Activated CD4-positive, alpha-beta memory T cell treated with anti-CD3 and anti-CD28 coated beads, Interleukin-2, amount 10 ng/mL, durations not matched to agents 7 days and 5 days (primary cell): ENCODE measurements at regions of chr3 and their contacts with region 1.

Region 1: DNA sequence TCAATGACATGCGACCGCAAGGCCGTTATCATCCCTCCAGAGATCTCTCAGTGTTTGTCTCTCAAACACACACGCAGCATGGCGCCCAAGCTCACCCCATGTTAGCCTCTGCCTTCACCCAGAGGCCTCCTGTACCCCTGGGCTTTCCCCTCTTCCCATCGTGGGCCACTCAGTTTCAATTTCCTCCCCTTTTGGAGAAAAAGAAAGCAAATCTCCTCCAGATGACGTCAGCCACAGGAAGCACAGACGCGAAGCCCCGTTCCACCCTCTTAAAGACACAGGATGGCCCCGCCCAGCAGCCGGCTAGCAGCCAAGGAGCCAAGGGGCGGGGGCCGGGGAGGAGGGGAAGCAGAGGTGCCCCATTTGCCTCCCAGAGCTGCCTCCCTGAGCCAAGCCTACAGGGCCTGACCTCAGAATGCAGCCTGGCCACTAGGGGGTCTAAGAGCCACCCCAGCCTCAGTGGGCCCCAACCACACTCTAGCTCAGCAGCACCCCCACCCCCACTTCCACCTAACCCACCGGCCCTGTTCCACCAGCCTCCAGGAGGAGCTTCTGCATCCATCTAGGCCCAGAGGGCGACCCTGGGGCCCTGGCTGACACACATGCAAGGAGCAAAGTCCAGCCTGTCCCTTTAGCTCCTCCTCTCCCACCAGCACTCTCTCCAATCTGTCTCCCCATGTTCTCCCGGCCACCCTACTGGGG is 26.5 kb downstream of the ATRIP start:
- DNase-seq: peak; percentile 97
- H3K4me3 Mint-ChIP-seq: peak overlapping the region; percentile 83
- H3K27ac Mint-ChIP-seq: peak overlapping the region; percentile 98
- H3K4me1 Mint-ChIP-seq: peaks cover 74% of the 10 kb centered on the region
- H3K27me3 Mint-ChIP-seq: no peaks in the 10 kb centered on the region

Region 2: DNA sequence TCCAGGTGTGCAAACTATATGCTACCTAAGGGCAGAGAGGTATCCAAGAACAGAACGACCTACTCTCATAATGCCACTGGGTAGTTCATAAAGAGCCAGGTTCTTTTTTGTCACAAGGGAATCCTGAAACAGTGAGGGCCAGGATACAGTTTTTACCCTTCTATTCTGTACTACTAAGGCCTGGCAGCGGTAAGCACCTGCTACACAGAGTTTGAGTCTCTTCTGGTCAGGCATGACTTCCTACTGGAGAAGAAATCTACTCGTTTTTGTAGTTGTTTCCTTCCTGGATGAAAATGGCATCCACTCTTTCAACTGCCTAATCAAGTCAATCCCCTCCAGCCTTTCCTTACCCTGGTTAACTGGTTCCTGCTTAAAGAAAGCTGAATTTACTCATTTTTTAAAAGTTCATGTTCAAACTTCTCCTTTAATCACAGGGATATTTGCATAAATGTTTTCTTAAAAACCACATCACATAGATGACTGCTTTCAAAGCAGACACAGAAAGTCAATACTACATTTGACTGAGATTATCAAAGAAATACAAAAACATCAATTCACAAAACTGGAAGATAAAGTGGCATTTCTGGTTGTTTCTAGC is 496.8 kb before region 1 on chr3:
- CTCF ChIA-PET with region 1: no interaction called
- POLR2A ChIA-PET with region 1: no interaction called
- DNase-seq: no peak
- H3K4me3 Mint-ChIP-seq: no peak overlapping the region
- H3K27ac Mint-ChIP-seq: no peak overlapping the region
- H3K4me1 Mint-ChIP-seq: peaks cover 4% of the 10 kb centered on the region
- H3K27me3 Mint-ChIP-seq: no peaks in the 10 kb centered on the region

Region 3: DNA sequence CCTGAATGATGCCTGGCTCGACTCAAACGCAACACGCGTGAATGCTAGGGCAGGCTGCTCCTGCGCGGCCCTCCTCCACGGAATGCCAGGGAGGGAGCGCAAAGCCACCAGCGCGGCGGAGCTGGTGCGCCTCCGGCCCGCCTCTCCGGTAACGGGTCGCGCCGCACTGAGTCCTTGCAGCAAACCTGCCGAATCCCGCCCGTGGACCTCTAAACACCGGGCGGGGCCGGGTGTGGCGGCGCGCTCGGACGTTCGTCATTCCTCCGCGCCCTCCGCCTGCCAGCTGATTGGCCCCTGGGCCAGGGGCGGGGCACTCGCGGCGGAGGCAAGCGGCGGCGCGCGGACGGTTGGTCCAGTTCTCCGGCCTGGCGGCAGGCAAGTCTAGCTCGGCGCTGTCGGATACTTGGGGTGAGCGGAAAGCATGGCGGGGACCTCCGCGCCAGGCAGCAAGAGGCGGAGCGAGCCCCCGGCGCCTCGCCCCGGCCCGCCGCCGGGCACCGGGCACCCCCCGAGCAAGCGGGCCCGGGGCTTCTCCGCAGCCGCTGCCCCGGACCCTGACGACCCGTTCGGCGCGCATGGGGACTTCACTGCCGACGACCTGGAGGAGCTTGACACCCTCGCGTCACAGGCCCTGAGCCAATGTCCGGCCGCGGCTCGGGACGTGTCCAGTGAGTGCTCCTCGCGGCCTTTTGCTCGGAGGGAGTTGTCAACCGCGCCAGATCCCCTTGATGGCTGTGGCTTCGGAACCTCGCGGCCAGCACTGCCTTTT is 26.5 kb before region 1 on chr3 and contains the start of gene ATRIP:
- CTCF ChIA-PET with region 1: interaction called, 17 read pairs
- POLR2A ChIA-PET with region 1: interaction called, 69 read pairs
- DNase-seq: peak; percentile 90
- H3K4me3 Mint-ChIP-seq: peak within 1 kb of the TSS; percentile 90
- H3K27ac Mint-ChIP-seq: peak within 1 kb of the TSS; percentile 88
- H3K4me1 Mint-ChIP-seq: peaks cover 53% of the 10 kb centered on the region
- H3K27me3 Mint-ChIP-seq: no peaks in the 10 kb centered on the region
- total RNA-seq, gene ATRIP: 13.4 to 15.2 TPM

Region 4: GRCh38 chr3:48459773-48460516 is 13.1 kb before region 1 on chr3:
- CTCF ChIA-PET with region 1: interaction called, 6 read pairs
- POLR2A ChIA-PET with region 1: interaction called, 23 read pairs
- DNase-seq: no peak
- H3K4me3 Mint-ChIP-seq: no peak overlapping the region
- H3K27ac Mint-ChIP-seq: no peak overlapping the region
- H3K4me1 Mint-ChIP-seq: peaks cover 6% of the 10 kb centered on the region
- H3K27me3 Mint-ChIP-seq: no peaks in the 10 kb centered on the region

Region 5: DNA sequence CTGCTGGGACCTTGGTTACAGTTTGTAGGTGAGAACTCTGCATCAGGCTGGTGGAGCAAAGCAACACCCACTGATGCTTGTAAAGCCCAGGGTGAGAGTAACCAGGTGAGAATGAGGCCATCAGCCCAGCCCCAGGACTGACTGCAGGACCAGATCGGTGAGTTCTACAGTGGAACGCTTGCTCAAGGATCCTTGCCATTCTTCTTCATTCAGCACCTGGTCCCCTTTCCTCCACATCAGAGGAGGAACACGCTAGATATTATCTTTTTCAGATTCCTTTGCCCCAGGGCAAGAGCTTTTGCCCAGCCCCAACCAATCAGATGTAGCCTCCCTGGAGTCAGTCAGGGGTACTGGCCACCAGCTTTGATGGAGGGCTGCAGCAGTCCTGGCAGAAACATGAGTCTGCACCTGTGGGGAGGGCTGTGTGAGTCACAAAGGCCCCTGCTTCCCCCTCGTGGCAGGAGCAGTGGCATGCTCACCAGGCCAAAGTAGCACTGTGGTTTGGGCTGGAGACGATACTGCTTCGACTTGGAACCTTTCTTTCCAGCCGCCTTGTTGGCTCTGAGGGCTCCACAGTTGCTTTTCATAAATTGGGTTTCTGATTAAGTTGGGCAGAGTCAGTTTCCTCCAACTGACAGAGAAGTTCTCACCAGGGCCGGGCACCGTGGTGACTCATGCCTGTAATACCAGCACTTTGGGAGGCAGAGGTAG is 34.4 kb after region 1 on chr3:
- CTCF ChIA-PET with region 1: interaction called, 22 read pairs
- POLR2A ChIA-PET with region 1: interaction called, 33 read pairs
- DNase-seq: peak; percentile 82
- H3K4me3 Mint-ChIP-seq: no peak overlapping the region
- H3K27ac Mint-ChIP-seq: peak overlapping the region; percentile 83
- H3K4me1 Mint-ChIP-seq: peaks cover 56% of the 10 kb centered on the region
- H3K27me3 Mint-ChIP-seq: peaks cover 16% of the 10 kb centered on the region

Region 6: DNA sequence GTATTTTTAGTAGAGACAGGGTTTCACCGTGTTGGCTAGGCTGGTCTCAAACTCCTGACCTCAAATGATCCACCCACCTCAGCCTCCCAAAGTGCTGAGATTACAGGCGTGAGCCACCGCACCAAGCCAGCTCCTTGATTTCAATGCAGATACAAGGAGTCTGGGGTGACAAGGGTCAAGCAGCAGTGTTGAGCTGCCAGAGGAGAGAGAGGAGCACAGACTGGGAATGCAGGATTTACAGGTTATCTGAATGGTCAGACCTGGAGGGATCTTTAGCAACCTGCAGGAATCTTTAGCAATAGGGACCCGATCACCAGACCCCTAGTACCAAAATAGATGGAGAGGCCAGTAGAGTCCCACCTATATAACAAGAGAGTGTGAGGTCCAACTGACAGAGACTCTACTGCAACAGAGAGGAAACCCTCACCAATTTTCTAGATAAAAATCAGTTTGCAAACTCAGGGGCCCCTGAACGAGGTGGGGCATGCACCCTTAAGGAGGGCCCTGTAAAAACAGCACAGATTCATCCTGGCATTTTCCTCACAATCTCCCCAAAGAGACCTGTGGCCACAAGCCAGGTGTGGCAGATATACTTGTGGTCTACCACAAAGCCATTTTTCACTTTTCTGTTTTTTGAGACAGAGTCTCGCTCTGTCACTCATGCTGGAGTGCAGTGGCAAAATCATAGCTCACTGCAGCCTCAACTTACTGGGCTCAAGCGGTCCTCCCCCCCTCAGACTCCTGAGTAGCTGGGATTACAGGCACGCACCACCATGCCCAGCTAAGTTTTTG is 41.6 kb after region 1 on chr3:
- CTCF ChIA-PET with region 1: interaction called, 7 read pairs
- POLR2A ChIA-PET with region 1: interaction called, 19 read pairs
- DNase-seq: peak; percentile 74
- H3K4me3 Mint-ChIP-seq: peak overlapping the region; percentile 32
- H3K27ac Mint-ChIP-seq: peak overlapping the region; percentile 72
- H3K4me1 Mint-ChIP-seq: peaks cover 69% of the 10 kb centered on the region
- H3K27me3 Mint-ChIP-seq: peaks cover 16% of the 10 kb centered on the region

Region 7: GRCh38 chr3:48548729-48549705 is 76.0 kb after region 1 on chr3:
- CTCF ChIA-PET with region 1: interaction called, 19 read pairs
- POLR2A ChIA-PET with region 1: interaction called, 15 read pairs
- DNase-seq: peak; percentile 87
- H3K4me3 Mint-ChIP-seq: no peak overlapping the region
- H3K27ac Mint-ChIP-seq: no peak overlapping the region
- H3K4me1 Mint-ChIP-seq: peaks cover 8% of the 10 kb centered on the region
- H3K27me3 Mint-ChIP-seq: no peaks in the 10 kb centered on the region

Region 8: GRCh38 chr3:48556793-48557626 is 83.9 kb after region 1 on chr3 and contains the start of gene PFKFB4:
- CTCF ChIA-PET with region 1: interaction called, 23 read pairs
- POLR2A ChIA-PET with region 1: interaction called, 25 read pairs
- DNase-seq: peak; percentile 100
- H3K4me3 Mint-ChIP-seq: peak within 1 kb of the TSS; percentile 79
- H3K27ac Mint-ChIP-seq: peak within 1 kb of the TSS; percentile 74
- H3K4me1 Mint-ChIP-seq: peaks cover 49% of the 10 kb centered on the region
- H3K27me3 Mint-ChIP-seq: no peaks in the 10 kb centered on the region
- total RNA-seq, gene PFKFB4: 33.3 to 34.4 TPM